ENCODE measurements at regions of chr7 and their contacts with region 1.

Region 1: GRCh38 chr7:954330-955238 is at the start of gene ADAP1:
- DNase-seq: no peak
- ATAC-seq: peak; percentile 57
- H3K4me3 ChIP-seq: peak within 1 kb of the TSS; percentile 84
- H3K27ac ChIP-seq: peak within 1 kb of the TSS; percentile 69
- H3K4me1 ChIP-seq: peaks cover 28% of the 10 kb centered on the region
- H3K27me3 ChIP-seq: no peaks in the 10 kb centered on the region
- CTCF ChIP-seq: peak; percentile 20 to 65 (median 32); a peak in 3 of 6 replicates
- EP300 ChIP-seq: no peak
- POLR2A ChIP-seq: no peak; the same call in 1 of the 2 replicates
- RAD21 ChIP-seq: peak; percentile 75
- polyA plus RNA-seq, gene ADAP1: 0.22 TPM in 1 of 2 experiments, not detected in the other

Region 2: DNA sequence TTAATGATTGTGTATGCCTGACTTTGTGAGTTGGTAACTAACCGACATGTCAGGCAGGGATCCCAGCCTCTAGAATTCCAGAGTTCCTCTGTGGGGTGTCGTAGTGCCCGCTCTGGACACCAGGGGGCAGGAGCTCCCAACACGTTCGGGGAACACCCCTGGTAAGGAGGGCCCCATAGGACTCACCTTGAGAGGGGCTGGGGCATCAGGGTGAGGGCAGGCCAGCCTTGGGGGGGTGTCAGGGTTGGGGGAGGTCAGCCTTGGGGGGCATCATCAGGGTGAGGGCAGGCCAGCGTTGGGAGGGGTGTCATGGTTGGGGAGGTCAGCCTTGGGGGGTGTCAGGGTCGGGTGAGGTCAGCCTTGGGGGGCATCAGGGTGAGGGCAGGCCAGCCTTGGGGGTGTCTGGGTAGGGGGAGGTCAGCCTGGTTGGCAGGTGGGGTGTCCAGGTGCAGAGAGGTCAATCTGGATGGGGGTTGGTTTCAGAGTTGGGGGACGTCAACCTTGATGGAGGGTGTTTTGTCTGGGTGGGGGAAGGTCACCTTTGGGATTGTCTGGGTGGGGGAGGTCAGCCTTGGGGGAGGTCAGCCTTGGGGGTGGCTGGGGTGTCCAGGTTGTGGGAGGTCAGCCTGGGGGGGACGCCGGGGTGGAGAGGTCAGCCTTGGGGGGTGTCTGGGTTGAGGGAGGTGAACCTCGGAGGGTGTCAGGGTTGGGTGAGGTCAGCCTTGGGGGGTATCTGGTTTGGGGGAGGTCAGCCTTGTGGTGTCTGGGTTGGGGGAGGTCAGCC is 167.9 kb before region 1 on chr7:
- CTCF ChIA-PET with region 1: no interaction called
- POLR2A ChIA-PET with region 1: no interaction called
- RAD21 ChIA-PET with region 1: no interaction called
- SMC1A ChIA-PET with region 1: no interaction called
- in situ Hi-C with region 1: no loop called
- intact Hi-C with region 1: loop called (anchors 10 kb)
- DNase-seq: no peak
- ATAC-seq: peak; percentile 95
- H3K4me3 ChIP-seq: no peak overlapping the region
- H3K27ac ChIP-seq: no peak overlapping the region
- H3K4me1 ChIP-seq: no peaks in the 10 kb centered on the region
- H3K27me3 ChIP-seq: no peaks in the 10 kb centered on the region
- CTCF ChIP-seq: peak; percentile 84 to 91 (median 89)
- EP300 ChIP-seq: no peak
- POLR2A ChIP-seq: no peak
- RAD21 ChIP-seq: peak; percentile 92

Region 3: GRCh38 chr7:880450-880849 is 74.1 kb before region 1 on chr7:
- CTCF ChIA-PET with region 1: no interaction called
- POLR2A ChIA-PET with region 1: no interaction called
- RAD21 ChIA-PET with region 1: no interaction called
- SMC1A ChIA-PET with region 1: no interaction called
- in situ Hi-C with region 1: no loop called
- intact Hi-C with region 1: no loop called
- DNase-seq: no peak
- ATAC-seq: no peak
- H3K4me3 ChIP-seq: no peak overlapping the region
- H3K27ac ChIP-seq: no peak overlapping the region
- H3K4me1 ChIP-seq: no peaks in the 10 kb centered on the region
- H3K27me3 ChIP-seq: no peaks in the 10 kb centered on the region
- CTCF ChIP-seq: no peak
- EP300 ChIP-seq: no peak
- POLR2A ChIP-seq: no peak
- RAD21 ChIP-seq: no peak

Region 4: GRCh38 chr7:923108-924041 is 31.2 kb before region 1 on chr7:
- CTCF ChIA-PET with region 1: interaction called, 4 read pairs
- POLR2A ChIA-PET with region 1: interaction called, 17 read pairs
- RAD21 ChIA-PET with region 1: interaction called, 35 read pairs
- SMC1A ChIA-PET with region 1: interaction called, 12 read pairs
- in situ Hi-C with region 1: no loop called
- intact Hi-C with region 1: loop called (anchors 2 kb)
- DNase-seq: peak; percentile 81
- ATAC-seq: peak; percentile 85
- H3K4me3 ChIP-seq: peak overlapping the region; percentile 72
- H3K27ac ChIP-seq: peak overlapping the region; percentile 99
- H3K4me1 ChIP-seq: peaks cover 49% of the 10 kb centered on the region
- H3K27me3 ChIP-seq: no peaks in the 10 kb centered on the region
- CTCF ChIP-seq: no peak
- EP300 ChIP-seq: peak; percentile 71 to 77; a peak in 3 of 4 replicates
- POLR2A ChIP-seq: peak; percentile 80
- RAD21 ChIP-seq: 0 out of 2 replicates have a peak, but pooled peaks have one; percentile 1

Region 5: GRCh38 chr7:936131-937054 is 18.2 kb before region 1 on chr7:
- CTCF ChIA-PET with region 1: interaction called, 8 read pairs
- POLR2A ChIA-PET with region 1: interaction called, 3 read pairs
- RAD21 ChIA-PET with region 1: interaction called, 4 read pairs
- SMC1A ChIA-PET with region 1: interaction called, 11 read pairs
- in situ Hi-C with region 1: no loop called
- intact Hi-C with region 1: loop called (anchors 2 kb)
- DNase-seq: peak; percentile 92
- ATAC-seq: peak; percentile 92
- H3K4me3 ChIP-seq: no peak overlapping the region; the same call in 1 of the 2 replicates
- H3K27ac ChIP-seq: peak overlapping the region; percentile 81
- H3K4me1 ChIP-seq: peaks cover 16% of the 10 kb centered on the region
- H3K27me3 ChIP-seq: no peaks in the 10 kb centered on the region
- CTCF ChIP-seq: no peak
- EP300 ChIP-seq: no peak
- POLR2A ChIP-seq: no peak; the same call in 1 of the 2 replicates
- RAD21 ChIP-seq: no peak

Measured in GM12878 (cell line).